CD14-positive monocyte (primary cell): ENCODE measurements at regions of chr1 and their contacts with region 1.

Region 1: GRCh38 chr1:110034451-110035235 is at the start of gene STRIP1:
- DNase-seq: peak; percentile 95 to 97 (median 96)
- H3K4me3 ChIP-seq: peak within 1 kb of the TSS; percentile 67 to 94 (median 83)
- H3K4me3 Mint-ChIP-seq: peak within 1 kb of the TSS; percentile 88 to 94
- H3K27ac ChIP-seq: peak within 1 kb of the TSS; percentile 57 to 88
- H3K27ac Mint-ChIP-seq: peak within 1 kb of the TSS; percentile 83 to 95 (median 90)
- H3K4me1 ChIP-seq: peaks cover 16 to 33% of the 10 kb centered on the region in 2 donors
- H3K4me1 Mint-ChIP-seq: peaks cover 36% of the 10 kb centered on the region
- H3K27me3 ChIP-seq: no peaks in the 10 kb centered on the region
- H3K27me3 Mint-ChIP-seq: peaks cover 0 to 1% (median 0%) of the 10 kb centered on the region in 3 donors
- CTCF ChIP-seq: no peak
- polyA plus RNA-seq, gene STRIP1: 8.9 to 33.6 (median 11.0) TPM

Region 2: GRCh38 chr1:109426278-109427170 is 608.1 kb before region 1 on chr1 and contains the start of gene PSMA5:
- intact Hi-C with region 1: loop called in 1 of 2 experiments (anchors 10 kb)
- DNase-seq: peak; percentile 97 to 99 (median 99)
- H3K4me3 ChIP-seq: peak within 1 kb of the TSS; percentile 49 to 82 (median 69)
- H3K4me3 Mint-ChIP-seq: peak within 1 kb of the TSS; percentile 91 to 96
- H3K27ac ChIP-seq: peak within 1 kb of the TSS; percentile 88 to 91
- H3K27ac Mint-ChIP-seq: peak within 1 kb of the TSS; percentile 96 to 99 (median 98)
- H3K4me1 ChIP-seq: peaks cover 22 to 26% of the 10 kb centered on the region in 2 donors
- H3K4me1 Mint-ChIP-seq: peaks cover 27% of the 10 kb centered on the region
- H3K27me3 ChIP-seq: no peaks in the 10 kb centered on the region
- H3K27me3 Mint-ChIP-seq: peaks cover 0 to 2% (median under 1%) of the 10 kb centered on the region in 3 donors
- CTCF ChIP-seq: no peak
- polyA plus RNA-seq, gene PSMA5: 36.6 to 119 (median 118) TPM

Region 3: DNA sequence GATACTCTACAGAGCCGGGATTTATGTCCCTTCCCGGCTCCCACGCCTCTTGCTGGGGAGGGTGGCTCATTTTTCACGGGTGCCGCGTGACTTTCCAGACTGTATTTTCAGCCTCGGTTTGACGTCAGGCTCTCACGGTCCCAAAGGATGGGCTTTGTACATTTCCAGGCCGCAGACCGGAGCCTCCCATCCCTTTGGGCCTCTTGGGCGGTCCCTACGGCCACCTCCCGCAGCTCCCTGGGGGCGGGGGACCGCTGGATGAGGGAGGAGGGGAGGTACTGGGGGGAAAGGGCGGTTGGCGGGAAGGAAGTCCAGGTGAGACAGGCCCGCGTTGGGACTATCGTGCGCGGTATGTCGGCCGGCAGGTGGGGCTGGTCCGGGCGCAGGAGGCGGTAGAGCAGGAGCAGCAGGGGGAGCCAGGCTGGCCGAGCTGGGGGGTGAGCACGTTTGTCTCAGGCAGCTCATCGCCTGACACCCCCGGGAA is 95.5 kb after region 1 on chr1:
- intact Hi-C with region 1: no loop called
- DNase-seq: no peak
- H3K4me3 ChIP-seq: no peak overlapping the region
- H3K4me3 Mint-ChIP-seq: peak overlapping the region in 1 of 2 donors; percentile 53
- H3K27ac ChIP-seq: no peak overlapping the region
- H3K27ac Mint-ChIP-seq: no peak overlapping the region
- H3K4me1 ChIP-seq: no peaks in the 10 kb centered on the region
- H3K4me1 Mint-ChIP-seq: no peaks in the 10 kb centered on the region
- H3K27me3 ChIP-seq: peaks cover 9 to 43% of the 10 kb centered on the region in 2 donors
- H3K27me3 Mint-ChIP-seq: peaks cover 40 to 52% (median 47%) of the 10 kb centered on the region in 3 donors
- CTCF ChIP-seq: no peak

Region 4: GRCh38 chr1:110407260-110408210 is 372.9 kb after region 1 on chr1 and contains the start of gene LAMTOR5:
- intact Hi-C with region 1: loop called in 1 of 2 experiments (anchors 10 kb)
- DNase-seq: peak; percentile 84 to 92 (median 88)
- H3K4me3 ChIP-seq: peak within 1 kb of the TSS; percentile 85 to 98 (median 95)
- H3K4me3 Mint-ChIP-seq: peak within 1 kb of the TSS; percentile 100
- H3K27ac ChIP-seq: peak within 1 kb of the TSS; percentile 90 to 98
- H3K27ac Mint-ChIP-seq: peak within 1 kb of the TSS; percentile 98 to 100 (median 100)
- H3K4me1 ChIP-seq: peaks cover 15 to 24% of the 10 kb centered on the region in 2 donors
- H3K4me1 Mint-ChIP-seq: peaks cover 21% of the 10 kb centered on the region
- H3K27me3 ChIP-seq: no peaks in the 10 kb centered on the region
- H3K27me3 Mint-ChIP-seq: peaks cover 0 to 7% (median 3%) of the 10 kb centered on the region in 3 donors
- CTCF ChIP-seq: no peak
- polyA plus RNA-seq, gene LAMTOR5: 304 to 420 (median 368) TPM